Activated T-helper 2 cell treated with anti-CD3 and anti-CD28 coated beads, Interferon-gamma antibody, Interleukin-2, Interleukin-4, amounts not matched to agents 10 μg/mL and 5 μg/mL and 100 μg/mL, durations not matched to agents 14 hours and 24 hours and 36 hours (primary cell): ENCODE measurements at regions of chr14 and their contacts with region 1.

Region 1: DNA sequence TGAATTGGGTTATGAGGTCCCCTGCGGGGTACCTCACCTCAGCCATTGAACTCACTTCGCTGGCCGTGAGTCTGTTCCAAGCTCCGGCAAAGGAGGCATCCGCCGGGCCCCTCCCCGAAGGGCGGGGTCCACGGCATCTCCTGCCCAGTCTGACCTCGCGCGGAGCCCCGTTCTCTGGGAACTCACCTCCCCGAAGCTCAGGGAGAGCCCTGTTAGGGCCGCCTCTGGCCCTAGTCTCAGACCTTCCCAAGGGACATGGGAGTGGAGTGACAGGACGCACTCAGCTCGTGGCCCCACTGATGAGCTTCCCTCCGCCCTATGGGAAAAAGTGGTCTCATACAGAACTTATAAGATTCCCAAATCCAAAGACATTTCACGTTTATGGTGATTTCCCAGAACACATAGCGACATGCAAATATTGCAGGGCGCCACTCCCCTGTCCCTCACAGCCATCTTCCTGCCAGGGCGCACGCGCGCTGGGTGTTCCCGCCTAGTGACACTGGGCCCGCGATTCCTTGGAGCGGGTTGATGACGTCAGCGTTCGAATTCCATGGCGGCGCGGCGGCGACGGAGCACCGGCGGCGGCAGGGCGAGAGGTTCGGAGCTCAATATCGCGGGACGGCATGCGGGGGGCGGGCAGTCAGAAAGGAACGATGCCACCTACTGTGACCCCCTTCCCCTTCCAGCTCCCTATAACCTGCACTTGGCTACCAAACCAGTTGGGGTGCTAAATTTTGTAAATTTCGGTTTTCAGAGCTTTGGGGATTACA is at the start of gene PARP2:
- DNase-seq: peak; percentile 94
- H3K4me3 Mint-ChIP-seq: peak within 1 kb of the TSS; percentile 98
- H3K27ac Mint-ChIP-seq: peak within 1 kb of the TSS; percentile 94
- H3K4me1 Mint-ChIP-seq: peaks cover 13% of the 10 kb centered on the region
- H3K27me3 Mint-ChIP-seq: peaks cover 3% of the 10 kb centered on the region
- total RNA-seq, gene PARP2: 31.2 and 31.5 TPM in 2 replicates

Region 2: GRCh38 chr14:20327005-20327869 is 16.0 kb before region 1 on chr14:
- intact Hi-C with region 1: loop called (anchors 1 kb)
- DNase-seq: no peak
- H3K4me3 Mint-ChIP-seq: peak overlapping the region; percentile 5
- H3K27ac Mint-ChIP-seq: peak overlapping the region; percentile 44
- H3K4me1 Mint-ChIP-seq: peaks cover 39% of the 10 kb centered on the region
- H3K27me3 Mint-ChIP-seq: no peaks in the 10 kb centered on the region

Region 3: DNA sequence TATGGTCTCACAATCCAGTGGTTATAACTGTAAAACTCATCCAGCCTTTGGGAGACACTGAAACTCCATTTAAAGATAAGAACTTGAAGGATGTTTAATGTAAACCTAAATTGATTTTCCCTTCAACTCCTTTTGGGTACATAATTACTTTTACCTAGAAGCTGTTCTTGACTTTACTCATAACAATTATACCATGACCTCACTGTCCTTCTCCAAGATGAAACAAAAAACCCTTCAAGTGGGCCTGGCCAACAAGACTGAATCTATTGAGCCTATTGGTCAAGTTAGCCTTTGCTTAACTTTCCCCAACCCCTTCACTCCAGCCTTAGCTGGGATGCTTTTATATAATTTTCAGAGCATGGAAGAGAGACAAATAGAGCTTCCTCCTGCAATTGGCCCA is 22.7 kb after region 1 on chr14:
- intact Hi-C with region 1: loop called (anchors 2 kb)
- DNase-seq: no peak
- H3K4me3 Mint-ChIP-seq: no peak overlapping the region
- H3K27ac Mint-ChIP-seq: no peak overlapping the region
- H3K4me1 Mint-ChIP-seq: peaks cover 8% of the 10 kb centered on the region
- H3K27me3 Mint-ChIP-seq: no peaks in the 10 kb centered on the region

Region 4: GRCh38 chr14:20386276-20386855 is 43.1 kb after region 1 on chr14:
- intact Hi-C with region 1: no loop called
- DNase-seq: no peak
- H3K4me3 Mint-ChIP-seq: no peak overlapping the region
- H3K27ac Mint-ChIP-seq: no peak overlapping the region
- H3K4me1 Mint-ChIP-seq: no peaks in the 10 kb centered on the region
- H3K27me3 Mint-ChIP-seq: no peaks in the 10 kb centered on the region

Region 5: GRCh38 chr14:20454516-20455354 is 111.5 kb after region 1 on chr14 and contains the starts of genes APEX1 and OSGEP:
- intact Hi-C with region 1: loop called (anchors 1 kb)
- DNase-seq: peak; percentile 97
- H3K4me3 Mint-ChIP-seq: peak within 1 kb of the TSS; percentile 63
- H3K27ac Mint-ChIP-seq: no peak within 1 kb of the TSS
- H3K4me1 Mint-ChIP-seq: peaks cover 11% of the 10 kb centered on the region
- H3K27me3 Mint-ChIP-seq: no peaks in the 10 kb centered on the region
- total RNA-seq, gene APEX1: 217 and 228 TPM in 2 replicates
- total RNA-seq, gene OSGEP: 66.0 and 66.5 TPM in 2 replicates

Region 6: DNA sequence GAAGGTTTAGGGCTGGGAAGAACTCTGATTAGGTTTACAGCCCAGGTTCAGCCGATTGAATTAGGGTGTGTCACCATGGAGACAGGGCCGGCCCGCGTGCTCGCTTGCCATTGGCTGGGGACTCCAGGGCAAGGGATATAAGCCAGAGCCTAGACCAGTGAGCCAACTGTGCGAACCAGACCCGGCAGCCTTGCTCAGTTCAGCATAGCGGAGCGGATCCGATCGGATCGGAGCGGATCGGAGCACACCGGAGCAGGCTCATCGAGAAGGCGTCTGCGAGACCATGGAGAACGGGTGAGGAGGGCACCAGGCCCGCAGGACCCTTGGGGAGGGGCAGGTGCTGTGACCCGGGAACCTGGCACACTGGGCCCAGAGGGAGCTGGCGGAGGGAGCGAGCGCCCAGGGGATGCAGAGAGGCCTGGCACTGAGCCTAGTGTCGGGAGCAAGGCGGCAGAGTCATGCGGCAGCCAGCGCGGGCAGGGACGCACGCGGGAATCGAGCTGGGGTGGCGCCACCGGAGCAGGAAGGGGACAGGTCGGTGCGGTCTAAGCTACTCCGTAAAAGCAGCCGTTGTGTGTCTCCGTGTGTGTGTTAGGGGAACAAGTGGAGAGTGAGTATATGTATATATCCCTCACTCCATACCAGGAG is 126.1 kb after region 1 on chr14 and contains the start of gene PNP:
- intact Hi-C with region 1: loop called (anchors 1 kb)
- DNase-seq: peak; percentile 86
- H3K4me3 Mint-ChIP-seq: peak within 1 kb of the TSS; percentile 94
- H3K27ac Mint-ChIP-seq: peak within 1 kb of the TSS; percentile 96
- H3K4me1 Mint-ChIP-seq: peaks cover 32% of the 10 kb centered on the region
- H3K27me3 Mint-ChIP-seq: peaks cover 4% of the 10 kb centered on the region
- total RNA-seq, gene PNP: 133 and 137 TPM in 2 replicates